GM10248 (cell line): ENCODE measurements at regions of chr1 and their contacts with region 1.

Region 1: DNA sequence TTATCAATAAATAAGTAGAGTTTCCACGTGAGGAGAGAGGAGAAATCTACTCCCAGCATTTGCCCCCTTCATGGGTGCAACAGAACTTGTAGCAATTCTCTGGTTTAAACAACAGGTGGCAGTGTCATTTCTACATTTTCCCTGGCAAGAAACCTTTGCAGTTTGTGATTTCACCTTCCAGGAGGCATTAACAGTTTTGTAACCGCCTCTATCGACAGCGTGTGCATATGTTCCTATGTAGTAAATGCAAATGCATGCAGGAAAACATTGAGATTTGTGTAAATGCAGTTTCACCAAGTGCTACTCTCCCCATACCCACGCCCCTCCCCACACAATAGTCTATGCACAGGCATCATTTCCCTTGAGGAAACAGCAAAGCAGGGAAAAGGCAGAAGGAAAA is 494.7 kb downstream of the SMYD3 start:
- DNase-seq: peak; percentile 47
- CTCF ChIP-seq: peak; percentile 61

Region 2: DNA sequence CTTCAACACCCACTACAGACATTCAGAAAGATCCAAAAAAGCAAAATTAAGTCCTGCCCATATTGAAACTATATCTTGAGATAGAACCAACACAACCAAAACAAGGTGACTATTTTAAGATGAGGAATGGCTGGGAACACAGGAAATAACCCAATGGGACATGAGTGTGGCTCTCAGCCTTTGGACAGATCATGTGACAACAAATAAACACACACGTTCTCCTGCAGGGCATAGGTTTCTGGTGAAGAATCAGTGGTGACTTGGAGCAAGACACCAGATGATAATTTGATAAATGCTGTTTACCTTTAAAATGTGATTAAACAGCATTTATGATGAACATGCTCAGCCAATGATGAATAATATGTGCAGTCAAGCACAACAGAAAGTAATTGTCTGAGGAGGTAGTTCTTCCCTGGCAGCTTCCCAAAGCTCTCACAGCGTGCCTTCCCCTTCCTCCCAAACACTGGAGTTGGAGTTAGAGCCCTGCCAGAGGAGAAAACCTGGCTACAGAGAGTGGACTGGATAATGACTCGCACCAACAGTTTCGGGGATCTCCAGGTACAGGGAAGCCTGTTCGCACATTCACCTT is 31.1 kb after region 1 on chr1:
- CTCF ChIA-PET with region 1: no interaction called
- POLR2A ChIA-PET with region 1: no interaction called
- DNase-seq: no peak
- CTCF ChIP-seq: no peak

Region 3: DNA sequence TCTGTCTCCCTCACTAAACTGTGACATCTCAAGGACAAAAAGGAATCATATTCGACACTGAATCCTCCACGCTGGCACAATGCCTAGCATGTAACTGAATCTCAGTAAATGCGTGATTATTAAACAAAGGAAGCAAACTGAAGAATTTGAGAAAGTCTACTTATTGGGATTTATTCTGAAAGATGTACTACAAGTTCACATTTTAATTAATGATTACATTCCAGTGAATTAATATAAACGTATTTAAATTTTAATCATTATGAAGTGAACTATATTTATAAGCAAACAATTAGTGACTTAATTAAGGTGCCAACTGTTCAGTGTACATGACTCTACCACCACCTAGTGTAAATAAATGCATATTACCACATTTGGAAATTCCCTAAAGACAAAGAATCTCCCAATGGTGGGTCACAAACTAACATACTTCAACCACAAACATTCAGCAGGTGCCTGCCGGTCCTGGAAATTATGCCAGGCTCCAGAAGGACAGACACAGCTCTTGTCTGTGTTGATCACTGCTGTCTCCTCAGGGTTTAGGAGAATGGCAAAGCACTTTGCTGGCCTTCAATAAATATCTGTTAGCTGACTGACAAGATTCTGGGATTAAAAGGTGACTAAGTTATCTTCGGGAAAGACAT is 438.4 kb after region 1 on chr1:
- CTCF ChIA-PET with region 1: interaction called, 19 read pairs
- POLR2A ChIA-PET with region 1: no interaction called
- DNase-seq: peak; percentile 48
- CTCF ChIP-seq: peak; percentile 48